Colonic mucosa (tissue), 4 donors: ENCODE measurements at regions of chr17 and their contacts with region 1.

Region 1: DNA sequence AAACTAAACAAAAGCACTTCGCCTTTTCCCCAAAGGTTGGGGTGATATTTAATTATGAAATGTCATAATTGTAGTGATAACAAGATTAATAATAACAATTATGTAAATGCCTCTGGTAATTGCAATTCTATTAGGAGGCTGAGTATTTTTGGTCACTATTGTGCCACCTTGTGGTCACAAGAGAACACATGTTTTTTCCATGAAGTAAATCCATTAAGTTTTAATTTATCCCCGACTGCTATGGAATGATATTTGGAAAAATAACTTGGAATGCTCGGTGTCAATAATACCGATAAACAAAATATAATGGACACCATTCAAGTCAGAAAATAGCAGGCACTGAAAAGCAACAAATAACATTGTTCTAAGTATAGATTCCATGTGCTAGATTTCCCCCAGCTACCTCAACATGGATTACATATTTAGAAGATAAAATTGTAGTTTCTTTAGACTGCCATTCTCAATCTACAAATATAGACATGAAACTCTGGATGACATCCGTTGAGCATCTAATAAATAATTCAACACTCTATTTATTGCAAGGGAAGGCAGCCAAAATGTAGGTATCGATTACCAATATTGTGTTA is 25.0 kb upstream of the KCNJ2 start:
- DNase-seq: no peak
- H3K4me3 ChIP-seq: no peak overlapping the region
- H3K27ac ChIP-seq: no peak overlapping the region
- H3K4me1 ChIP-seq: no peaks in the 10 kb centered on the region
- H3K27me3 ChIP-seq: no peaks in the 10 kb centered on the region
- CTCF ChIP-seq: peak; percentile 61

Region 2: DNA sequence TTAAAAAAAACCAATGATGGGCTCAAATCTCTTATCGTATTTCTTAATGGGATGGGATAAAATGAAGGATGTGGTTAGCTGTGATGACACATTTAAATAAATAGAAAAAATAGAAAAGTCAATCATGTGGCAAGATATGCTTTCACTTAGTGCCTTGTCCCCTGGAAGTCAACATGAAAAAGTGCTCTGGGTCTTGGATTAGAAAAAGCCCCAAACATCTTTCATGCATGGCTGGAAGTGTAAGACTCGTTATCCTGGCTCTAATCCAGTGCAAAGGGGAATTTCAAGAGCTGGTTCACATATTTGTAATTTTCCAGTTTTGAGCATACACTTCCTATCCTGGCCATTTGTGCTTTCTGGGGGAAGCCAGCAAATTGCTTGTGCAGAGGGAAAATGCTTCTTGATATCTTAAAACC is 569.0 kb before region 1 on chr17:
- intact Hi-C with region 1: loop called (anchors 10 kb)
- DNase-seq: no peak
- H3K4me3 ChIP-seq: no peak overlapping the region
- H3K27ac ChIP-seq: no peak overlapping the region
- H3K4me1 ChIP-seq: no peaks in the 10 kb centered on the region
- H3K27me3 ChIP-seq: no peaks in the 10 kb centered on the region
- CTCF ChIP-seq: no peak